Endothelial cell of umbilical vein (primary cell): ENCODE measurements at regions of chr5 and their contacts with region 1.

Region 1: DNA sequence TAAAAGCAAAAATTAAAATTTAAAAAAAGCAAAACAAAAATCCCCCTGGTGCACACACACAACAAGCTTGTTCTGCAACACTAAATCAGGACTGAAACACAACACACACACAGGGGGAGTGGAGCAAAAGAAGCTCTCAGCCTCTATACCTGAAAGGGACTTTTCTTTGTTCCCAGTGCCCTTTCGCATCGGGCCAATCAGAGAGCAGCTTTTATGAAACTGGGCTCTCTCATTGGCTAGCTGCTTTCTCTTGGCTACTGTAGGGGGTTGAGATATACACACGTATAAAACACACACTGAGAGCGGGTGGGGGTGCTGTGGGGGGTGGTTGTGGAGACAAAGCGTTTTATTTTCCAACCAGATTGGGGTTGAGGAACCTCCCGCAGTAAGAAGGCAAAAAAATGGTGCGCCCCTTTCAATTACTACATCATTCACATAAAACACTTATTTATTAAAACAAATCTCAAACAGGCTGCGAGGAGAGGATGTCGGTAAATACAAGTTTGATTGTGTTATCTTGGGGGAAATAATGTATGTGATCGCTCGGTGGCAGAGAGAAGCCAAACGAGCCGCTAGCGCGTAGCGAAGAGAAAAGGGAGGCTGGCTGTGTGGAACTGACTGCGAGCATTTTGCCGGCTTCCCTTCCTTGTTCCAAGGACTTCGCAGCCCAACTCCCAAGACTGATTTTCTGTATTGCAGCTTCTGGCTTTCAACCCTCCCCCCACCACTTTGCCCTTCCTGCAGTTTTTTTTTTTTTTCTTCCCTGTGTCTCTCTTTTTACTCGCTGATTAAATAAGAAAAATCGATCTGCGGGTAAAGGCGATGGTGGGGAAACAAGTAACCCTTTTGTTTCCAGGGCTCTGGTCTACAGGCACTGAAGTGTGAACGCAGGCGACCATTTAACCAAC is 2.5 kb upstream of the ZNF608 start:
- DNase-seq: peak; percentile 97
- H3K4me3 ChIP-seq: peak overlapping the region; percentile 65 to 89 (median 88)
- H3K27ac ChIP-seq: peak overlapping the region; percentile 98
- H3K4me1 ChIP-seq: peaks cover 20% of the 10 kb centered on the region
- H3K27me3 ChIP-seq: no peaks in the 10 kb centered on the region
- CTCF ChIP-seq: no peak
- POLR2A ChIP-seq: no peak

Region 2: GRCh38 chr5:123937230-123937629 is 811.7 kb before region 1 on chr5:
- CTCF ChIA-PET with region 1: no interaction called
- POLR2A ChIA-PET with region 1: no interaction called
- dilution Hi-C with region 1: no loop called
- intact Hi-C with region 1: loop called (anchors 1 kb)
- DNase-seq: peak; percentile 68
- H3K4me3 ChIP-seq: no peak overlapping the region
- H3K27ac ChIP-seq: no peak overlapping the region
- H3K4me1 ChIP-seq: no peaks in the 10 kb centered on the region
- H3K27me3 ChIP-seq: no peaks in the 10 kb centered on the region
- CTCF ChIP-seq: peak; percentile 51 to 62
- POLR2A ChIP-seq: no peak

Region 3: DNA sequence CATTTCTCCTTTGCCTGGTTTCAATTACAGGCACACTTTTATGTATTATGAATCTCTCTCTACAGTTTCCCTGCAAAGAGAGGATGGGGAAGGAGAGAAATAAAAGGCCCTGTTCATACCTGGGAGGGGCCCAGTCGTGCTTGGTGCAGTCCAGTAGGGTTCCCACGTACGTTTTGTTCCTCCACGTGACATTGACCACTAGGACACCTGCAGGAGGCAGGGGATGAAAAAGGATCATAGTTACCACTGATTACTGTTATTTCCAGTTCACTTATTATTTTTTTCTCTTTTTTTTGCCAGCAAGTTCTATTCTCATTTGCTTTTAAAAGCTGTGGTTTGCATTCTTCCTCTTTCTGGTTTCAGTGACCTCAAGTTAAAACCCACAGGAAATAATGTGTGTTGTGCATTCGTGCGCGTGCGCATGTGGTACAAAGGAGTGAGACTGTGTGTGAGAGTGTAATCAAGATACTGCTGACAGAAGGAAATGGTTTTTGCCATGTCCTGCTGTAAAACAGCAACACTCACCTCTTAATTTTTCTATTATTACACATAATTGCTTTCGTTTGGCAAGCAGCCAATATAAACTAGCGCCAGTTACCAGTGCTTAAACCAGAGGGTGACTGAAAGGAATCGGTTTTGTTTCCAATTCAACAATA is 99.3 kb before region 1 on chr5:
- CTCF ChIA-PET with region 1: interaction called, 12 read pairs
- POLR2A ChIA-PET with region 1: interaction called, 22 read pairs
- dilution Hi-C with region 1: no loop called
- intact Hi-C with region 1: loop called (anchors 1 kb)
- DNase-seq: peak; percentile 98
- H3K4me3 ChIP-seq: peak overlapping the region in 2 of 3 experiments; percentile 17 to 49
- H3K27ac ChIP-seq: peak overlapping the region; percentile 92
- H3K4me1 ChIP-seq: peaks cover 46% of the 10 kb centered on the region
- H3K27me3 ChIP-seq: no peaks in the 10 kb centered on the region
- CTCF ChIP-seq: no peak
- POLR2A ChIP-seq: peak; percentile 60

Region 4: GRCh38 chr5:124902097-124902821 is 153.3 kb after region 1 on chr5:
- CTCF ChIA-PET with region 1: no interaction called
- POLR2A ChIA-PET with region 1: no interaction called
- dilution Hi-C with region 1: no loop called
- intact Hi-C with region 1: loop called (anchors 2 kb)
- DNase-seq: peak; percentile 30
- H3K4me3 ChIP-seq: no peak overlapping the region
- H3K27ac ChIP-seq: no peak overlapping the region
- H3K4me1 ChIP-seq: peaks cover 16% of the 10 kb centered on the region
- H3K27me3 ChIP-seq: no peaks in the 10 kb centered on the region
- CTCF ChIP-seq: no peak
- POLR2A ChIP-seq: no peak

Region 5: DNA sequence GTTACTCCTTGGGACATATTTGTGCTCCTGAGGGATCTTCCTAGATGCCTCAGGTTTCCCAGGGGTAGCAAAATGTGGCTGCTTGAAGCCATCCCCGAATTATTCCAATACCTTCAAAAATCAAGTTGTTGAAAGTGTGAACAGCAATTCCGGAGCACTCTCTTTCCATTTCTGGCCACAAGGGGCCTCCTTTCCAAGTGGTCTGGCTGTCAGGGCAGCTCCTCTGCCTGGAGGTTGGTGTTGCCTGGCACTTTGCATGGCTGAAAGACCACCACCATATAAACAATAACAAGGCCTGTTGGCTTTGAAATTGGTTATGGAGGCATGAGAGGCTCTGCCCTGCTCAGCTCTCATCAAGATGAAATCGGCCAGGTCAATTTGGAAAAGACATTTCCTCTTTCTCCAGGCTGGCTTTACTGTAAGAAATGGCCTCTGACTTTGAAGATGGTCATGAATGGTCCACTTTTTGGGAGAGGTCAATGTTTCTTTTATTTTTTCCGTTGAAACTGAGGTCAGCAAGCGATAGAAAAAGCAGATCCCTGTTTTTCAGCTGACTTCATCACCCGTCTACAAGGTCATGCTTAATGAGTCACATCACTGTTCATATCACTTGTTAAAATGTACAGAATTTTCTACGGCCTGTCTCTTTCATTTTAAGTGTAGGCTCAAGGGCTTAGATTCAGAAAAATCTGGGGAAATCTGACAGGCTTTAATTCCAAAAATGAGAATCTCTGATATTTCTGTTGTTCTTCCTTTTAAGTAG is 478.6 kb after region 1 on chr5:
- CTCF ChIA-PET with region 1: interaction called, 5 read pairs
- POLR2A ChIA-PET with region 1: no interaction called
- dilution Hi-C with region 1: no loop called
- intact Hi-C with region 1: loop called (anchors 2 kb)
- DNase-seq: peak; percentile 33
- H3K4me3 ChIP-seq: no peak overlapping the region
- H3K27ac ChIP-seq: no peak overlapping the region
- H3K4me1 ChIP-seq: no peaks in the 10 kb centered on the region
- H3K27me3 ChIP-seq: no peaks in the 10 kb centered on the region
- CTCF ChIP-seq: peak; percentile 48 to 62
- POLR2A ChIP-seq: no peak

Region 6: DNA sequence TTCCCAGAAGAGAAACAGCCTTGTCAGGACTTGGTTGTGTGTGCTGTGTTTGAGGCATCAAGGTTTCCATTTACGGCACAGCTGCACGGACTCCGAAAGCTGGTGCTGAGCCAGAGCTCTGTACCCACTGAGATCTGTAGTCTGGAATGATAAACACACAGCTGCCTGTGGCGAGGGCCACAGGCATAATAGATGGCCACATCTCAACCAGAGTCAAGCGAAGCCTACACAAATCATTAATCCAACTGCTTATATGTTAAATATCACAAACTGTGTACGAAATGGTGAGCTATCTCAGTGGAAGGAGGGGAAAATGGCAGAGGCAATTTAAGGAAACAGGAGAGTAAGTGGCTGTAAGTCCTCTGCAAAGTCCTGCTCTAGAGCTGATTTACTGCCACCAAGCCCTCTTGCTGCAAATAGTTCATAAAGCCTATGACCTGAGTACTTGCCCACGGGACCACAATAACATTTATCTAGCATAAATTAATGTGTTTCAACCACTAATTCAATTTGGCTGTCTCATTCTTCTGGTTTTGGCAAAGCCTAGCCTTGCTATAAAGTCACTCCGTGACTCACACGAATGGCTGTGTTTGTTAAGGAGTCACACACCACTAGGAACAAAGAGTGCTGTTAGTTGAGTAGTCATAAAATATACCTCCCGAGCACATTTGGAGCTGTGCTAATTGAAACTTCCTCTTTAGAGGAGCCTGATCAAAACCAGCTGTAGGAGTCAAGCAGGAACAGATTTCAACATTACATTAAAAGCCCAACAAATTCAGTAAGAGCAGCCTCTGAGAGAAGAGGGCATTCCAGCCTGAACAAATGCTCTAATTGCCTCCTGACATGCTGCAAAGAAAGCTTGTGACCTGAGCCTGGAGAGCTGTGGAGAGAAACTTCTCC is 736.1 kb after region 1 on chr5:
- CTCF ChIA-PET with region 1: interaction called, 4 read pairs
- POLR2A ChIA-PET with region 1: interaction called, 5 read pairs
- dilution Hi-C with region 1: no loop called
- intact Hi-C with region 1: loop called (anchors 1 kb)
- DNase-seq: peak; percentile 96
- H3K4me3 ChIP-seq: peak overlapping the region in 1 of 3 experiments; percentile 28
- H3K27ac ChIP-seq: peak overlapping the region; percentile 99
- H3K4me1 ChIP-seq: peaks cover 36% of the 10 kb centered on the region
- H3K27me3 ChIP-seq: no peaks in the 10 kb centered on the region
- CTCF ChIP-seq: no peak
- POLR2A ChIP-seq: peak; percentile 72